CD8-positive, alpha-beta T cell (primary cell): ENCODE measurements at regions of chr11 and their contacts with region 1.

Region 1: DNA sequence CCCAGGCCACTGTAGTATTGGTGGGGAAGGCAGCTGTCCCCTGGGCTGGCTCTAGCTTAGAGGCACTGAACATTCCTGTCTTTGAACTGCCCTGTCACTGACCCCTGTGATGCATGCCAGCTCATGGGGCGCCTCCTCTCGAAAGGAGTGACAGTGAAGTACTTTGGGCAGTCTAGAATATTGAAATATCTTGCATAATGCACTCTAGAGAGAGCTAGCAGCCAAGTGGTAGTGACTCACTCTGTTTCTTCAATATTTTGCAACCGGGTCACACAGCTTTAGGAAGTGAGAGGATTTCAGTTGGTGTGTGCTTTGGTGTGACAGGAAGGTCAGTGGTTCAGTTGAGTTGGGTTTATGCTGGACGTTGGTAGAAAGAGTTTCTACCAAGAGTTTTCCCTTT is 35.5 kb upstream of the ST14 start:
- DNase-seq: peak in 1 of 9 experiments; percentile 25
- ATAC-seq: no peak
- H3K4me3 ChIP-seq: no peak overlapping the region
- H3K4me3 Mint-ChIP-seq: no peak overlapping the region
- H3K27ac ChIP-seq: no peak overlapping the region
- H3K27ac Mint-ChIP-seq: no peak overlapping the region
- H3K4me1 ChIP-seq: peaks cover 24% of the 10 kb centered on the region
- H3K4me1 Mint-ChIP-seq: peaks cover 31% of the 10 kb centered on the region
- H3K27me3 ChIP-seq: no peaks in the 10 kb centered on the region
- H3K27me3 Mint-ChIP-seq: no peaks in the 10 kb centered on the region
- CTCF ChIP-seq: no peak

Region 2: GRCh38 chr11:129881570-129882170 is 242.4 kb before region 1 on chr11:
- CTCF ChIA-PET with region 1: interaction called, 5 read pairs
- POLR2A ChIA-PET with region 1: no interaction called
- intact Hi-C with region 1: loop called in 1 of 2 experiments (anchors 2 kb)
- DNase-seq: peak; percentile 13 to 64 (median 42)
- ATAC-seq: peak; percentile 82
- H3K4me3 ChIP-seq: no peak overlapping the region
- H3K4me3 Mint-ChIP-seq: no peak overlapping the region
- H3K27ac ChIP-seq: no peak overlapping the region
- H3K27ac Mint-ChIP-seq: no peak overlapping the region
- H3K4me1 ChIP-seq: no peaks in the 10 kb centered on the region
- H3K4me1 Mint-ChIP-seq: no peaks in the 10 kb centered on the region
- H3K27me3 ChIP-seq: no peaks in the 10 kb centered on the region
- H3K27me3 Mint-ChIP-seq: no peaks in the 10 kb centered on the region
- CTCF ChIP-seq: peak; percentile 60

Region 3: DNA sequence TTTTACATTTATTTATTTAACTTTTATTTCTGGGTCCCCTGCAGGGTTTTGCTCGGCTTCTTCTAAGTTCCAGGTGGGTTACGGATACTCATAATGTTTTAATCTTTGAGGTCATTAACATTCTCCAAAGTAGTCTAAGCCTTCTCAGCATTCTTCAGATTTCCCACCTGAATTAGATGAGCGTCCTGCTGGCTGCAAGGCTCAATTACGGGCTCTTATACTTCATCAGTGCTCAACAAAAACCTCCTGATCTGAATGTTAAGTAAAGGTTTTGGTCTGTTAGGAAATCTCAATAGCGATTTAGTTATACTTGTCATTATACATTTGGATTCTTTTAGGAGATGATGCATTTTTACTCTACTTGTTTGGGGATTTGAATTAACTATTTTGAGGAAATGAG is 201.4 kb before region 1 on chr11:
- CTCF ChIA-PET with region 1: interaction called, 125 read pairs
- POLR2A ChIA-PET with region 1: no interaction called
- intact Hi-C with region 1: no loop called
- DNase-seq: no peak
- ATAC-seq: no peak
- H3K4me3 ChIP-seq: no peak overlapping the region
- H3K4me3 Mint-ChIP-seq: no peak overlapping the region
- H3K27ac ChIP-seq: no peak overlapping the region
- H3K27ac Mint-ChIP-seq: no peak overlapping the region
- H3K4me1 ChIP-seq: peaks cover 5% of the 10 kb centered on the region
- H3K4me1 Mint-ChIP-seq: peaks cover 6% of the 10 kb centered on the region
- H3K27me3 ChIP-seq: peaks cover 0 to 3% of the 10 kb centered on the region in 2 experiments
- H3K27me3 Mint-ChIP-seq: no peaks in the 10 kb centered on the region
- CTCF ChIP-seq: no peak

Region 4: GRCh38 chr11:129992161-129992944 is 131.7 kb before region 1 on chr11:
- CTCF ChIA-PET with region 1: interaction called, 52 read pairs
- POLR2A ChIA-PET with region 1: no interaction called
- intact Hi-C with region 1: no loop called
- DNase-seq: peak in 6 of 9 experiments; percentile 20 to 63 (median 48)
- ATAC-seq: peak; percentile 91
- H3K4me3 ChIP-seq: no peak overlapping the region
- H3K4me3 Mint-ChIP-seq: no peak overlapping the region
- H3K27ac ChIP-seq: no peak overlapping the region
- H3K27ac Mint-ChIP-seq: peak overlapping the region; percentile 46
- H3K4me1 ChIP-seq: no peaks in the 10 kb centered on the region
- H3K4me1 Mint-ChIP-seq: peaks cover 10% of the 10 kb centered on the region
- H3K27me3 ChIP-seq: no peaks in the 10 kb centered on the region
- H3K27me3 Mint-ChIP-seq: no peaks in the 10 kb centered on the region
- CTCF ChIP-seq: peak; percentile 42

Region 5: DNA sequence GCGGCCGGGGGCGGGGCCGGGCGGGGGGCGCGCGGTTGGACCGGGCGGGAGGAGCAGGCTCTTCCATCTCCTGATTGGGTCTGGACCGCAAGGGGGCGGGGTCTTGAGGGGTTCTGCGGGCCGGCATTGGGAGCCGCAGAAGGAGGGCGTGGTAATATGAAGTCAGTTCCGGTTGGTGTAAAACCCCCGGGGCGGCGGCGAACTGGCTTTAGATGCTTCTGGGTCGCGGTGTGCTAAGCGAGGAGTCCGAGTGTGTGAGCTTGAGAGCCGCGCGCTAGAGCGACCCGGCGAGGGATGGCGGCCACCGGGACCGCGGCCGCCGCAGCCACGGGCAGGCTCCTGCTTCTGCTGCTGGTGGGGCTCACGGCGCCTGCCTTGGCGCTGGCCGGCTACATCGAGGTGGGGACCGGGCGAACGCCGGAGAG is 54.4 kb before region 1 on chr11 and contains the start of gene APLP2:
- CTCF ChIA-PET with region 1: interaction called, 3 read pairs
- POLR2A ChIA-PET with region 1: interaction called, 4 read pairs
- intact Hi-C with region 1: loop called in 1 of 2 experiments (anchors 5 kb)
- DNase-seq: peak; percentile 94 to 99 (median 97)
- ATAC-seq: peak; percentile 93
- H3K4me3 ChIP-seq: peak within 1 kb of the TSS; percentile 77 to 88
- H3K4me3 Mint-ChIP-seq: peak within 1 kb of the TSS; percentile 97
- H3K27ac ChIP-seq: peak within 1 kb of the TSS; percentile 74 to 80
- H3K27ac Mint-ChIP-seq: peak within 1 kb of the TSS; percentile 95
- H3K4me1 ChIP-seq: peaks cover 17% of the 10 kb centered on the region
- H3K4me1 Mint-ChIP-seq: peaks cover 18% of the 10 kb centered on the region
- H3K27me3 ChIP-seq: no peaks in the 10 kb centered on the region
- H3K27me3 Mint-ChIP-seq: peaks cover 4% of the 10 kb centered on the region
- CTCF ChIP-seq: no peak
- total RNA-seq, gene APLP2: 23.2 to 24.7 TPM

Region 6: DNA sequence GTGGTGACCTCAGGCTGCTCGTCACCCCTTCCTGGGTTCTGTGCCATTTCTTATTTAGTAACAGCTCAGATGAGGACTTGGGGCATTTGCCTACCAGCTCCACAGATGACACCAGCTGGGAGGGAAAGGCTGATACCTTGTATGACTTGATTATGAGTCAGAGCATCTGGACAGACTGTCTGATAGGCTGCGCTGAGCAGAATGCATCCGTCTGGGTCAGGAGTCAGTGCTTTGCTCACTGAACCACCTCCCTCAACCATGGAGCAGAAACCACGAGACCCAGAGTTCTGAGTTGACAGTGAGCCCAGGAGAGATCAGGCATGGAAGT is 42.3 kb after region 1 on chr11:
- CTCF ChIA-PET with region 1: no interaction called
- POLR2A ChIA-PET with region 1: no interaction called
- intact Hi-C with region 1: no loop called
- DNase-seq: no peak
- ATAC-seq: no peak
- H3K4me3 ChIP-seq: no peak overlapping the region
- H3K4me3 Mint-ChIP-seq: no peak overlapping the region
- H3K27ac ChIP-seq: no peak overlapping the region
- H3K27ac Mint-ChIP-seq: no peak overlapping the region
- H3K4me1 ChIP-seq: no peaks in the 10 kb centered on the region
- H3K4me1 Mint-ChIP-seq: peaks cover 3% of the 10 kb centered on the region
- H3K27me3 ChIP-seq: peaks cover 2 to 8% of the 10 kb centered on the region in 2 experiments
- H3K27me3 Mint-ChIP-seq: peaks cover 56% of the 10 kb centered on the region
- CTCF ChIP-seq: no peak